ENCODE measurements at regions of chr15 and their contacts with region 1.

Region 1: DNA sequence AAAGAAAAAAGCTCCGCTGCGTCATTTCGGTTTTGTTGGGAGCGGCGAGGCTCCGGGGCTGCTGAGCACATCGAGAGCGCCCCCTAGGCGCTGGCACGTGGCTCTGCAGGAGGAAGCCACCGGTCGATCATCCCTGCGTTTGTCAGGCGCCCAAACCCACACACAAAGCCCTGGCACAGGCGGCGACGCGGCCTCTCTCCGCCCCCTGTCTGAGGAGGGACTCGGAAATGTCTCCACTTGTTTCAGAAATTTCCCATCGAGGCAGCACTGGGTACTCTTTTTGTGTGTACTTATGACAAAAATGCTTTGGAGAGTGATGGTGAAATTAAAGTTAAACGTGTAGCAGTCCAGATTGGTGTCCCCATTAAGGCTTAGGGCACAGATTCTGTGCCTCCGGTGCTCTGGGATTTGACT is 407.3 kb upstream of the ONECUT1 start:
- DNase-seq: peak; percentile 41
- H3K4me3 Mint-ChIP-seq: no peak overlapping the region
- H3K27ac Mint-ChIP-seq: no peak overlapping the region
- H3K4me1 Mint-ChIP-seq: no peaks in the 10 kb centered on the region
- H3K27me3 Mint-ChIP-seq: no peaks in the 10 kb centered on the region
- CTCF ChIP-seq: peak; percentile 71

Region 2: GRCh38 chr15:53209389-53210042 is 12.1 kb after region 1 on chr15:
- CTCF ChIA-PET with region 1: interaction called, 11 read pairs
- POLR2A ChIA-PET with region 1: no interaction called
- intact Hi-C with region 1: no loop called
- DNase-seq: no peak
- H3K4me3 Mint-ChIP-seq: no peak overlapping the region
- H3K27ac Mint-ChIP-seq: no peak overlapping the region
- H3K4me1 Mint-ChIP-seq: no peaks in the 10 kb centered on the region
- H3K27me3 Mint-ChIP-seq: no peaks in the 10 kb centered on the region
- CTCF ChIP-seq: no peak

Region 3: DNA sequence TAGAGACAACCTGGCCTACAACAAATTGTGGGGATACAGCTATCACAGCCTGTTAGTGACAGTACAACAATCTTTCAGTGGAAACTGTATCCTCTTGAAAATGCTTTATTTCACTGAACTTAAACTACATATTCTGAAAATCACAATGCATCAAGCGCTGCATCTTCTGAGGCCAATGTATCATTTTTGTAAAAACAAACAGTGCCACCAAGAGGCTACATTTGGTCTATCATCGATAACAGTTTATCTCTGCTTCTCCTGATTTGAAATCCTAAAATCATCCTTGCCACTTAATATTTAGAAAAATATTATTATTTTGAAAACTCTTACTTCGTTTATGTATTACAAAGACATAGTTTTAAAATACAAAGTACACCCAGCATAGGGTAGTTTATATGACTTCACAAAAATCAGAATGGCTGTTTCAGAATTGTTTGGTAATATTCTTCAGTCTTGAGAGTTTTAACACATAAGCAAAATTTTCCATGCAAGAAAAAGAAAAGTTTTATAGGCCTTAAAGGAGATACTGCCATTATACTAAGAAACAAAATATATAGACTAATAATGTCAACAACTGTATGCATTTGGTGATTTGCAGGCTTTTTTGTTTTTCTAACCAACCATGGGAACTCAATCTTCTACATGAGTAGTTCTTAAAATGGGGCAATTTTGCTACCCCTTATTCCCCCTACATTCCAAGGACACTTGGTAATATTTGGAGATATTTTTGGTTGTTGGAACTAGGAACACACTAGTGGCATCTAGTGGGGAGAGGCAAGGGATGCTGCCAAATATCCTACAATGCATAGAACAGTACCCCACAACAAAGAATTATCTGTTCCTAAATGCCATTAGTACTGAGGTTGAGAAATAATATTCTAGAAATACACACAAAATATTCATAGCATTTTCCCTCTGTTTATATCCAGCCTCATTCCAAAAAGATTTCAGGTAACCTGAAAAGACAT is 519.8 kb after region 1 on chr15:
- CTCF ChIA-PET with region 1: no interaction called
- POLR2A ChIA-PET with region 1: no interaction called
- intact Hi-C with region 1: loop called (anchors 10 kb)
- DNase-seq: peak; percentile 8
- H3K4me3 Mint-ChIP-seq: no peak overlapping the region
- H3K27ac Mint-ChIP-seq: no peak overlapping the region
- H3K4me1 Mint-ChIP-seq: no peaks in the 10 kb centered on the region
- H3K27me3 Mint-ChIP-seq: peaks cover 71% of the 10 kb centered on the region
- CTCF ChIP-seq: peak; percentile 30

Measured in MCF 10A (cell line).